Posterior cingulate gyrus (tissue), 11 donors: ENCODE measurements at regions of chr14 and their contacts with region 1.

Region 1: GRCh38 chr14:95157327-95158189 is at the start of gene DICER1:
- DNase-seq: peak; percentile 97 to 100 (median 98)

Region 2: DNA sequence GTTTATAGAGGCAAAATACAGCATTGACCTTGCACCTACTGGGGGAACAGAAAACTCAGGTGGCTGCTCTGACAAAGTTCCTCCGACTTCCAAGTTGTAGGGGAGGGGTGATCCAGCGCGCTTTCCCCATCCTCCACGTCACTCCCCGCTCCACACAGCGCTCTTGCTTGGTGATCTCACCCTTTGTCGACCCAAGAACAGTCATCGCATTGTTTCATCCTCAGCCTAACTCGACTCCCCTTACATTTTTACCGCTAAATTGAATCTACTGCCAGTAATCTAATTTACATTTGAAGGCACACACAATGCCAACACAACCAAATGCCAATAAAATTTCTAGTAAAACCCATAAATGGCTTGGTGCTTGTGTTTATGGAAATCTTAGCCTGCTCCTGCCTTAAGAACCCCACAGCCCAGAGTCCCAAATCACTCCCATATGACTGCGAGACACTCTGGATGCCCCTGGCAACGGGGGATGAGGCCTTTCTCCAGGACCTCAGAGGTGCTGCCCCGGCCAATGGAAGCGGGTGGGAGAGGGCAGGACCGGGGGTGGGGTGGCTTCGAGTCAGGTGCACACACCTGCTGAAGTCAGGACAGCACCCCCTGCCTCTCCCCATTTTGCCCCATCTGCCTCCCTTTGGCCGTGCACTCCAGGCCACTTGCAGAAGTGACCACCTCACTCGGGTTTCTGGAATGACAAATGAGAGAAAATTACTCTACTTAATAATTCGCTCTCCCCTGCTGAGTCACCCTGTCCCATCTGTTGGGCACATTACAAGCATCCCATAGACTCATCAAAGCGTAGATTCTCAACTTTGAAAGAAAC is 289.4 kb before region 1 on chr14:
- intact Hi-C with region 1: no loop called
- DNase-seq: peak in 8 of 10 donors; percentile 32 to 93 (median 64)

Region 3: GRCh38 chr14:95085326-95085725 is 72.2 kb before region 1 on chr14:
- intact Hi-C with region 1: no loop called
- DNase-seq: peak in 1 of 10 donors; percentile 38

Region 4: DNA sequence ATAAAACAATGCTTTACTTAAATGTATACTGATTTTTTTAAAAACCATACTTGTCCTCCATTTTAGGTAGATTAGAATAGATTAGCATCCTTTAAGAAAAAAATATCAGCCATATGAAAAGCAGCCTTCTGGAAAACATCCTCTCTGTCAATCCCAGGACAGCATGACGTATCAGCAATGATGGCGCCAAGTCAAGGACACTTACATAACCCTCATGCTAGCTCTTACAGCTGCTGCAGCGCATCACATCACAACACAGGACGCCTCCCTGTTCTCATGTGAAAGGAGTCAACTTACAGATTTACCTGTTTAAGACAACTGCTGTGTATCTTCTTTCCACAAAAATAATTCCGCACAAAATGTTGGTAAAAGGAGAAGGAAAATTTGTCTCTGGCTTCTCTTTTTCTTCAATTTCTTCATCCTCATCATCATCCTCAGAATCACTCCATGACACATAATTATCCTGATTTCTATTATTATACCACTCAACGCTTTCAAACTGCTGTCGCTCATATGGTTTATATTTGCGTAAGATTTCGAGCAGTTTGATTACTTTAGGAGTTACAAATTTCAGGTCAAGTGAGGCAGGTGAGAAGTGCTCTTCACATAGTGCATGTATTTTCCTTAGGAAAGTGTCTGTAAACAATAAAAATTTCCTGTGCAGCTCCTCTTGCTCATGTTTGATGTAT is 33.5 kb before region 1 on chr14:
- intact Hi-C with region 1: loop called (anchors 5 kb)
- DNase-seq: peak in 5 of 10 donors; percentile 14 to 80 (median 49)

Region 5: GRCh38 chr14:95319312-95320021 is 161.9 kb after region 1 on chr14 and contains the start of gene CLMN:
- intact Hi-C with region 1: loop called (anchors 10 kb)
- DNase-seq: peak in 4 of 10 donors; percentile 42 to 91 (median 76)

Region 6: GRCh38 chr14:95408731-95409476 is 251.3 kb after region 1 on chr14:
- intact Hi-C with region 1: loop called (anchors 10 kb)
- DNase-seq: peak in 3 of 10 donors; percentile 32 to 88 (median 52)